ENCODE measurements at regions of chr5 and their contacts with region 1.

Region 1: DNA sequence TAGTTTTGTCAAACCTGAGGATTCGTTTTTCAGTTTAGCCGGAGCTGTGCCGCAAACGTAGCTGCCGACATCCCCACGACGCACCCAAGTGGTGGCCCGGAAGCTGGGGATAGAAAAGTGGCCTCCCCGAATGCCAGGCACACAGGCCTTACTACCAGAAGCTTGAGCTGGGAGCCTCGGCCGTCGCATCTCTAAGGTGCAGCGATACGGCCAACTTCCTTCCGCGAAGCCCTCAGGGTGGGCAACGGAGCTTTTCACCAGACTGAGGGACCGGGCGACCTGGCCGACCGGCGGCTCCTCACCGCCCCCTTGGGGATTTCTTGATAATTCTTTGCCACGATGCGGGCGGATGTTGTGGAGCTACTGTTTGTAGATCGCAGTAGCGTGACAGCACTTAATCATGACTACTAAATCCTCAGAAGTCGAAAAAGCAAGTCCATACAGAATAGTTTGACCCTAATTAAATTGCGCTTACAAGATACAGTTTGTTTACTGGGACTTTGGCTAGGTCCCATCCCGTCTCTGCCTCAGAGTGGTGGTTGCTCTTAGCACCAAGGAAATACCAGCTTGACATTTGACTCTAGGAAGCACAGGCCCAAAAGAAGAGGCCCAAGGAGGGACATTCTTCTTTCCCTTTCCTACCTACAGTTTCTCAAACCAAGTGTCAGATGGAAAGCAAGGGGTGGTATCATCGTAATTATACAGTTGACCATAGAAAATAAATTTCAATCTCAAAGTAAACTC is 613 bp upstream of the TMEM267 start:
- DNase-seq: peak; percentile 78
- ATAC-seq: peak; percentile 72
- H3K4me3 Mint-ChIP-seq: peak overlapping the region; percentile 95
- H3K27ac Mint-ChIP-seq: peak overlapping the region; percentile 100
- H3K4me1 Mint-ChIP-seq: peaks cover 33% of the 10 kb centered on the region
- H3K27me3 Mint-ChIP-seq: no peaks in the 10 kb centered on the region
- CTCF ChIP-seq: no peak

Region 2: GRCh38 chr5:41903892-41904799 is 1580.1 kb before region 1 on chr5 and contains the start of gene RIMOC1:
- CTCF ChIA-PET with region 1: no interaction called
- POLR2A ChIA-PET with region 1: interaction called, 11 read pairs
- intact Hi-C with region 1: no loop called
- DNase-seq: peak; percentile 97
- ATAC-seq: peak; percentile 92
- H3K4me3 Mint-ChIP-seq: peak within 1 kb of the TSS; percentile 99
- H3K27ac Mint-ChIP-seq: peak within 1 kb of the TSS; percentile 99
- H3K4me1 Mint-ChIP-seq: peaks cover 34% of the 10 kb centered on the region
- H3K27me3 Mint-ChIP-seq: peaks cover 4% of the 10 kb centered on the region
- CTCF ChIP-seq: no peak
- total RNA-seq, gene RIMOC1: 26.0 and 30.2 TPM in 2 replicates

Region 3: GRCh38 chr5:42994246-42995151 is 489.8 kb before region 1 on chr5:
- CTCF ChIA-PET with region 1: no interaction called
- POLR2A ChIA-PET with region 1: interaction called, 43 read pairs
- intact Hi-C with region 1: loop called (anchors 2 kb)
- DNase-seq: peak; percentile 72
- ATAC-seq: peak; percentile 66
- H3K4me3 Mint-ChIP-seq: peak overlapping the region; percentile 99
- H3K27ac Mint-ChIP-seq: peak overlapping the region; percentile 100
- H3K4me1 Mint-ChIP-seq: peaks cover 34% of the 10 kb centered on the region
- H3K27me3 Mint-ChIP-seq: peaks cover under 1% of the 10 kb centered on the region
- CTCF ChIP-seq: peak; percentile 89

Region 4: GRCh38 chr5:43066799-43067741 is 417.2 kb before region 1 on chr5:
- CTCF ChIA-PET with region 1: no interaction called
- POLR2A ChIA-PET with region 1: interaction called, 44 read pairs
- intact Hi-C with region 1: loop called (anchors 2 kb)
- DNase-seq: peak; percentile 83
- ATAC-seq: peak; percentile 55
- H3K4me3 Mint-ChIP-seq: peak overlapping the region; percentile 95
- H3K27ac Mint-ChIP-seq: peak overlapping the region; percentile 99
- H3K4me1 Mint-ChIP-seq: peaks cover 40% of the 10 kb centered on the region
- H3K27me3 Mint-ChIP-seq: no peaks in the 10 kb centered on the region
- CTCF ChIP-seq: no peak

Region 5: DNA sequence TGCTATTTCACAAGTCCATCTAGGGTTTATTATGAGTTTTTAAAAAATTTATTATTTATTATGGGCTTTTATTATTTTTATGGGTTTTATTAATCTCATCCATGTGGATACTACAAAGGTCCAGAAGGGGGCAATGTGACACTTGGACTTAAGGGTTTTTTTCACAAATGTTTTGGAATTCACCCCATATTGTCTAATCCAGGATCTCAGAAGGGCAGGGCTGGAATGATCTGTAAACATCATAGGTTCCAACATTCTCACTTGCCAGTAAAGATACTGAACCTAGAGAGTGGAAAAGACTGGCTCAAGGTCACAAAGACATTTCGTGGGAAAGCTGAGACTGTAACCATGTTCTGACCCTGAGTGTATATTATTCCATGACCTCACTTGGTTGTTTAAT is 256.6 kb before region 1 on chr5:
- CTCF ChIA-PET with region 1: no interaction called
- POLR2A ChIA-PET with region 1: no interaction called
- intact Hi-C with region 1: loop called (anchors 10 kb)
- DNase-seq: no peak
- ATAC-seq: no peak
- H3K4me3 Mint-ChIP-seq: no peak overlapping the region
- H3K27ac Mint-ChIP-seq: no peak overlapping the region
- H3K4me1 Mint-ChIP-seq: no peaks in the 10 kb centered on the region
- H3K27me3 Mint-ChIP-seq: no peaks in the 10 kb centered on the region
- CTCF ChIP-seq: no peak

Region 6: DNA sequence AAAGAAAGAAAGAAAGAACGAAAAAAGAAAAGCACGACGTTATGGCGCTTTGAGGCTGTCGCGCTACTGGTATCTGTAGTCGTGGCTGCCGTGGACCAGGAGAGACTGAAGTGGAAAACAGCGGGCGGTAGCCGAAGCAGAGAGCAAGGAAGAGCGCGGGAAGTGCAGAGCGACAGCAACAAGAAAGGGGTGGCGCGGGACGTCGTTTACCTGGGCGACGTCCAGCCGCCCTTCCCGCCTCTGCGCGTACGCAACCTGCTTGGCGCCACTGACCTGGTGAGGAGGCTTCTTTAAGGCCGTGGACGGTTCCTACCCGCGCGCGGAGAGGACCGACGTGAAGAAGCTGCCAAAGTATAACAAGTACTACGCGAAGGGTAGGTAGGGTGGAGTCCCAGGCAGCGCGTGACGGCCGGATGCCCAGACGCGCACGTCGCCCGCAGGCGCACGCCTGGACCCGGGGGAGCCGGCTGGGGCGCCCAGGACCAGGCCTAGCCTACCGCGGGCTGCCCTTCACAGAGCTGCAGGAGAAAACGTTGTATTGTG is 87.4 kb before region 1 on chr5:
- CTCF ChIA-PET with region 1: interaction called, 7 read pairs
- POLR2A ChIA-PET with region 1: interaction called, 48 read pairs
- intact Hi-C with region 1: loop called (anchors 1 kb)
- DNase-seq: peak; percentile 67
- ATAC-seq: peak; percentile 100
- H3K4me3 Mint-ChIP-seq: peak overlapping the region; percentile 99
- H3K27ac Mint-ChIP-seq: peak overlapping the region; percentile 96
- H3K4me1 Mint-ChIP-seq: peaks cover 20% of the 10 kb centered on the region
- H3K27me3 Mint-ChIP-seq: no peaks in the 10 kb centered on the region
- CTCF ChIP-seq: no peak

Region 7: DNA sequence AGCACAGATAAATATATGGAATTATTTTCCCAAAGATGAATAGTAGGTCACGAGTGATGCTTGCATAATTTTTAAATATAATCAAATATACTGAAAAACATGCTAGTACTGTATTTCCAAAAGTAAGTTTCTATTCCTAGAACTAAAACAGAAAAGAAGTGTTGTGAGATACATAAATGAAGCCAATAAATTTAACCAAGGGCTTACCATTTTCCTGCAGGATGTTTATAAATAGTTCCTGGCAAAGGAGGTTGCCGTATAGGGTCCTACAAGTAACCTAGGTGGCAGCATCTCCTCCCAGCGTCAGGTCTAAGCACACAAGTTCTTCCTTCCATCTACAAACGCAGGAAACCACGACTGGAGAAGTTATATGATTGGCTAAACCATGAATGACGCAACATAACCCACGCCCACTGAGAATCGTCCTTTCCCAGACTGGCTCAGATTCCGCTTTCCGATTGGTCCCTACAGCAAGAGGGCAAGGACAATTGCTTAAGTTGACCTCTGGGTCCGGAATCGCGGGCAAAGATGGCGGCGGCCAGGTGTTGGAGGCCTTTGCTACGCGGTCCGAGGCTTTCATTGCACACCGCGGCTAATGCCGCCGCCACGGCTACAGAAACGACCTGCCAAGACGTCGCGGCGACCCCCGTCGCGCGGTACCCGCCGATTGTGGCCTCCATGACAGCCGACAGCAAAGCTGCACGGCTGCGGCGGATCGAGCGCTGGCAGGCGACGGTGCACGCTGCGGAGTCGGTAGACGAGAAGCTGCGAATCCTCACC is 1324.3 kb after region 1 on chr5 and contains the start of gene MRPS30:
- CTCF ChIA-PET with region 1: no interaction called
- POLR2A ChIA-PET with region 1: interaction called, 7 read pairs
- intact Hi-C with region 1: loop called (anchors 1 kb)
- DNase-seq: peak; percentile 72
- ATAC-seq: peak; percentile 96
- H3K4me3 Mint-ChIP-seq: peak within 1 kb of the TSS; percentile 97
- H3K27ac Mint-ChIP-seq: peak within 1 kb of the TSS; percentile 94
- H3K4me1 Mint-ChIP-seq: peaks cover 31% of the 10 kb centered on the region
- H3K27me3 Mint-ChIP-seq: peaks cover 4% of the 10 kb centered on the region
- CTCF ChIP-seq: no peak
- total RNA-seq, gene MRPS30: 41.4 and 41.8 TPM in 2 replicates

Measured in activated B cell treated with CpG ODN at 0.5 μM for 24 hours (primary cell).